CD8-positive, alpha-beta T cell (primary cell): ENCODE measurements at regions of chr18 and their contacts with region 1.

Region 1: GRCh38 chr18:3281456-3282400 is 19.8 kb downstream of the MYL12B start:
- DNase-seq: peak in 2 of 9 experiments; percentile 77 to 84
- ATAC-seq: peak; percentile 93
- H3K4me3 ChIP-seq: no peak overlapping the region
- H3K4me3 Mint-ChIP-seq: no peak overlapping the region
- H3K27ac ChIP-seq: no peak overlapping the region
- H3K27ac Mint-ChIP-seq: no peak overlapping the region
- H3K4me1 ChIP-seq: no peaks in the 10 kb centered on the region
- H3K4me1 Mint-ChIP-seq: peaks cover 4% of the 10 kb centered on the region
- H3K27me3 ChIP-seq: no peaks in the 10 kb centered on the region
- H3K27me3 Mint-ChIP-seq: no peaks in the 10 kb centered on the region
- CTCF ChIP-seq: peak; percentile 75

Region 2: DNA sequence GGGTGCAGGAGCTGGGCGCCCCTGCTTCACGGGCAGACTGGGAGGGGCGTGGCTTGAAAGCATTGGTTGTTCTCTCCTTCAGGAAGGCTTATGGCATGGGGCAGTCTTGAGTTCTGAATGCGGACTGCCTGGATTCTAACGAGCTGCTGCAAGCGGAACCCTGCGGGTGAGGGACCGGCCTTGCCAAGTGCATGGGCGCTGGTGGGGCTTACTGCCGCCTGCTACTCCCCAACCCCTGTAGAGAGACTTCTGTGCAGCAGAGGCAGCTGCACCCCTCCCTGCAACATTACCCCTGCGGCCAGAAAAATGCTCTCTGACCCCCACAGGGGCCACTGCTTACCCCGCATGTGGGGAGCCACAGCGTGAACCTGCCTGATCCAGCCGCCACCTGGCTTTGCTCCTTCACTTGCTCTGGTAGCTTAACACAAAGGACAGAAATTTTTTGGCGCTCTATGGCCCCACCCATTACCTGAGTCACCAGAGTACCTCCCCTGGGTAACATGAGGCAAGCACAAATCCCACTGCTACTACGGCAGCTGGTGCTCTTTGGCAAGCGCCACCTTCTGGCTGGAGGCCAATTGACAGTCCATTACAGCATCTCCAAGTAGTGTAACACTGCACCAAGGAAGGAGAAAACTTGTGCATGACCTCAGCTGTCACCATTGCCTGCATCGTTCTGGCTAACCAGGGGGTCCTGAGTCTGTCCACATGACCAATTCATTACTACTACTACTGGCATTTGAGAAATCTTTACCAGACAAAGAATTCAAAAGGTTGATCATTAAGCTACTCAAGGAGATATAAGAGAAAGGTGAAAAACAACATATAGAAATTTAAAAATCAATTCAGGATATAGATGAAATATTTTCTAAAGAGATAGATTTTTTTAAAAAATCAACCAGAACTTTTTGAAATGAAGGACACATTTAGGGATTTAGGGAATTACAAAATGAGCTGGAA is 15.6 kb after region 1 on chr18:
- CTCF ChIA-PET with region 1: interaction called, 49 read pairs
- POLR2A ChIA-PET with region 1: interaction called, 3 read pairs
- intact Hi-C with region 1: loop called in 1 of 2 experiments (anchors 1 kb)
- DNase-seq: peak; percentile 86 to 95 (median 93)
- ATAC-seq: peak; percentile 98
- H3K4me3 ChIP-seq: peak overlapping the region; percentile 71 to 87
- H3K4me3 Mint-ChIP-seq: peak overlapping the region; percentile 92
- H3K27ac ChIP-seq: peak overlapping the region; percentile 51 to 58
- H3K27ac Mint-ChIP-seq: peak overlapping the region; percentile 86
- H3K4me1 ChIP-seq: peaks cover 7% of the 10 kb centered on the region
- H3K4me1 Mint-ChIP-seq: peaks cover 8% of the 10 kb centered on the region
- H3K27me3 ChIP-seq: peaks cover 0 to 2% of the 10 kb centered on the region in 2 experiments
- H3K27me3 Mint-ChIP-seq: peaks cover 27% of the 10 kb centered on the region
- CTCF ChIP-seq: peak; percentile 79

Region 3: GRCh38 chr18:3323900-3324299 is 42.2 kb after region 1 on chr18:
- CTCF ChIA-PET with region 1: interaction called, 5 read pairs
- POLR2A ChIA-PET with region 1: no interaction called
- intact Hi-C with region 1: loop called in 1 of 2 experiments (anchors 2 kb)
- DNase-seq: no peak
- ATAC-seq: no peak
- H3K4me3 ChIP-seq: no peak overlapping the region
- H3K4me3 Mint-ChIP-seq: no peak overlapping the region
- H3K27ac ChIP-seq: no peak overlapping the region
- H3K27ac Mint-ChIP-seq: no peak overlapping the region
- H3K4me1 ChIP-seq: no peaks in the 10 kb centered on the region
- H3K4me1 Mint-ChIP-seq: no peaks in the 10 kb centered on the region
- H3K27me3 ChIP-seq: no peaks in the 10 kb centered on the region
- H3K27me3 Mint-ChIP-seq: peaks cover 13% of the 10 kb centered on the region
- CTCF ChIP-seq: no peak

Region 4: DNA sequence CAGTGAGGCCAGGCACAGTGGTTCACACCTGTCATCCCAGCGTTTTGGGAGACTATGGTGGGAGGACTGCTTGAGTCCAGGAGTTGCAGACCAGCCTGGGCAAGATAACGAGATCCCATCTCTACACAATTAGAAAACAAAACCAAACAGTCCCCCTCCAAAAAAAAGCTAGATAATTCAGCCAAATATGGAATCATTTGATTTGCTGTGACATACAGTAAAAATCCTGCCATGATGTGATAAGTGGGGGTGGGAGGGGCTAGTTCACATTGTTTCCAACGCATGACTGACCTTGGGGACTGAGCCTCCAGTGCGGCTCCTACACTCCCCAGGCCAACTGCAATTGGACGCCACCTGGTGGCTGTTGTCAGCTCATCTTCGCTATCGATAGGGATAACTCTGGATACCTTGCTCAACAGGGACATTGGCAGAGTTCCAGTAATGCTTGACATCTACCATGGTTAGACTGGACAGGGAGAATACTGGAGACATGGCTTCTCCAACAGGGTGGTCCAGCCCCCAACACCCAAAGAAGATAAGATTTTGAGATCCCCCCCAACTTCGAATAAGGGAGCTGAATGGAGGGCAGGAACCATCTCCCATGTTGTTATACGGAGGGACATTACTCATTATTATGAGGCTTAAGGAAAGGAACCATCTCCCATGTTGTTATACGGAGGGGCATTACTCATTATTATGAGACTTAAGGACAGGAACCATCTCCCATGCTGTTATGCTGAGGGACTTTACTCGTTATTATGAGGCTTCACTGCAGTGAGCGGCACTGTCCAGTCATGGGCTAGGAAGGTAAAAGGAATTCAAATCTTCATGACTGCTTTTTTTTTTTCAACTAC is 304.2 kb after region 1 on chr18:
- CTCF ChIA-PET with region 1: interaction called, 17 read pairs
- POLR2A ChIA-PET with region 1: no interaction called
- intact Hi-C with region 1: loop called (anchors 1 kb)
- DNase-seq: peak in 8 of 9 experiments; percentile 40 to 83 (median 66)
- ATAC-seq: peak; percentile 87
- H3K4me3 ChIP-seq: no peak overlapping the region
- H3K4me3 Mint-ChIP-seq: no peak overlapping the region
- H3K27ac ChIP-seq: no peak overlapping the region
- H3K27ac Mint-ChIP-seq: no peak overlapping the region
- H3K4me1 ChIP-seq: no peaks in the 10 kb centered on the region
- H3K4me1 Mint-ChIP-seq: peaks cover 8% of the 10 kb centered on the region
- H3K27me3 ChIP-seq: no peaks in the 10 kb centered on the region
- H3K27me3 Mint-ChIP-seq: no peaks in the 10 kb centered on the region
- CTCF ChIP-seq: peak; percentile 56

Region 5: GRCh38 chr18:3995476-3996102 is 713.9 kb after region 1 on chr18:
- CTCF ChIA-PET with region 1: no interaction called
- POLR2A ChIA-PET with region 1: no interaction called
- intact Hi-C with region 1: loop called (anchors 5 kb)
- DNase-seq: peak; percentile 3 to 71 (median 46)
- ATAC-seq: peak; percentile 55
- H3K4me3 ChIP-seq: no peak overlapping the region
- H3K4me3 Mint-ChIP-seq: no peak overlapping the region
- H3K27ac ChIP-seq: no peak overlapping the region
- H3K27ac Mint-ChIP-seq: no peak overlapping the region
- H3K4me1 ChIP-seq: no peaks in the 10 kb centered on the region
- H3K4me1 Mint-ChIP-seq: no peaks in the 10 kb centered on the region
- H3K27me3 ChIP-seq: no peaks in the 10 kb centered on the region
- H3K27me3 Mint-ChIP-seq: peaks cover 3% of the 10 kb centered on the region
- CTCF ChIP-seq: peak; percentile 78

Region 6: DNA sequence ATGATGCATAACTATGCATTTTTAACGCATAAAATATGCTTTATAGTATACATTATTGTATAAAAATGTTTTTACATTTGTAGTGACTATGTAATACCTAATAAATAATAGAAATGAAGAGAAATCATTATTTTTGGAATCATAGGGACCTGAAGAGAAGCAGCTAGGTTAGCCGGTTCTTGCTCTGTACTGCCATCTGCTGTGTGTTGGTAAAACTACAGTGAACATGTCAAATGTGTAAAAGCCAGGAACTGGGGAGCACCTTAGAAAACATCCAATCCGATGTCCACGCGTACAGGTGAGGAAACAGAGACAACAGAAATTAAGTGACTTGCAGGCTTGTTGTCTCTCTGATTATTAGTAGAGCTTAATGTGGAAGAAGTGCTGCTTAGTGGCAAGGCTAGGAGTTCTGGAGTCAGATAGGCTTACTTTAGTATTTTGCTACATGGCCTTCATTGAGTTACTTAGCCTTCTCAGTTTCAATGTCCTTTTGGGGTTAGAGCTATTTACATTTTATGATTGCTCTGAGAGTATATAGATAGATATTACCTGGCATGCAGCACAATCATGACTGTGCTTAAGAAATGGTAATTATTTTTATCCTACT is 786.9 kb after region 1 on chr18:
- CTCF ChIA-PET with region 1: no interaction called
- POLR2A ChIA-PET with region 1: no interaction called
- intact Hi-C with region 1: loop called in 1 of 2 experiments (anchors 10 kb)
- DNase-seq: peak in 6 of 9 experiments; percentile 3 to 43 (median 12)
- ATAC-seq: no peak
- H3K4me3 ChIP-seq: no peak overlapping the region
- H3K4me3 Mint-ChIP-seq: no peak overlapping the region
- H3K27ac ChIP-seq: no peak overlapping the region
- H3K27ac Mint-ChIP-seq: no peak overlapping the region
- H3K4me1 ChIP-seq: no peaks in the 10 kb centered on the region
- H3K4me1 Mint-ChIP-seq: no peaks in the 10 kb centered on the region
- H3K27me3 ChIP-seq: no peaks in the 10 kb centered on the region
- H3K27me3 Mint-ChIP-seq: peaks cover 9% of the 10 kb centered on the region
- CTCF ChIP-seq: peak; percentile 62